Heart left ventricle (tissue), 16 donors: ENCODE measurements at regions of chr6 and their contacts with region 1.

Region 1: GRCh38 chr6:7615611-7616383 is 25.8 kb downstream of the SNRNP48 start:
- DNase-seq: peak in 1 of 5 donors; percentile 43
- ATAC-seq: peak in 3 of 4 donors; percentile 16 to 60 (median 47)
- H3K4me3 ChIP-seq: peak overlapping the region in 6 of 12 donors; percentile 3 to 42 (median 33)
- H3K27ac ChIP-seq: no peak overlapping the region
- H3K4me1 ChIP-seq: peaks cover 0 to 29% (median 3%) of the 10 kb centered on the region in 12 donors
- H3K27me3 ChIP-seq: no peaks in the 10 kb centered on the region
- CTCF ChIP-seq: peak; percentile 56 to 78 (median 70)
- POLR2A ChIP-seq: no peak

Region 2: GRCh38 chr6:6676910-6677441 is 938.8 kb before region 1 on chr6:
- intact Hi-C with region 1: loop called in 2 of 10 experiments (anchors 5 to 10 kb)
- DNase-seq: peak in 4 of 5 donors; percentile 63 to 75 (median 72)
- ATAC-seq: peak; percentile 73 to 87 (median 86)
- H3K4me3 ChIP-seq: no peak overlapping the region
- H3K27ac ChIP-seq: peak overlapping the region in 11 of 12 donors; percentile 15 to 77 (median 58)
- H3K4me1 ChIP-seq: peaks cover 0 to 45% (median 11%) of the 10 kb centered on the region in 12 donors
- H3K27me3 ChIP-seq: no peaks in the 10 kb centered on the region
- CTCF ChIP-seq: peak; percentile 95 to 99 (median 98)
- POLR2A ChIP-seq: no peak

Region 3: GRCh38 chr6:7276199-7276524 is 339.6 kb before region 1 on chr6:
- intact Hi-C with region 1: loop called (anchors 1 to 10 kb)
- DNase-seq: no peak
- ATAC-seq: no peak
- H3K4me3 ChIP-seq: no peak overlapping the region
- H3K27ac ChIP-seq: no peak overlapping the region
- H3K4me1 ChIP-seq: peaks cover 0 to 17% (median 0%) of the 10 kb centered on the region in 12 donors
- H3K27me3 ChIP-seq: no peaks in the 10 kb centered on the region
- CTCF ChIP-seq: peak in 1 of 12 donors; percentile 1
- POLR2A ChIP-seq: no peak

Region 4: DNA sequence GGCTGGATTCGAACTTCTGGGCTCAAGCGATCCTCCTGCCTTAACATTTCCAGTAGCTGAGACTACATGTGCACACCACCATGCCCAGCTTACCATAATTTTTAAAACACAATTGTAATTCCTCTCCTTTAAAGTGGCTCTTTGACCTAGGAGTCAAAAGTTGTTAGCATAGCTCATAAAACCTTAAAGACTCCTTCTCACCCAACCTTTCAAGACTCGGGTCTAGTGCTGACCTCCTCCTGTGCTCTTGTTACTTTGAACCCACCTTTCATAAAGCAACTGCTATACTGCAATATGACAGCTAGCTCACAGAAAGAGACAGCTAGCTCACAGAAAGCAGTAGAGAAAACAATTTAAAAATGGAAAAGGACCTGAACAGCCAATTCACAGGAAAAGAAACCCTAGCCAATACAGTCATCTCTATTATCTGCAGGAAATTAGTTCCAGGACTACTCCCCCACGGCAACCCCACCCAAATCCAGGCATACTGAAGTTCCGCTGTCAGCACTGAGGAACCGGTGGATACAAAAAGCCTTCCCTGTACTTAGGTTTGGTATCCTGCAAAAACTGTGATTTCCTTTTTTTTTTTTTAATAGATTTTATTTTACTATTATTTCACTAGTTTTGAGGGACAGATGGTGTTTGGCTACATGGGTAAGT is 323.1 kb before region 1 on chr6:
- intact Hi-C with region 1: loop called in 3 of 10 experiments (anchors 5 to 10 kb)
- DNase-seq: no peak
- ATAC-seq: peak in 3 of 4 donors; percentile 62 to 90 (median 64)
- H3K4me3 ChIP-seq: no peak overlapping the region
- H3K27ac ChIP-seq: peak overlapping the region in 11 of 12 donors; percentile 2 to 68 (median 21)
- H3K4me1 ChIP-seq: peaks cover 0 to 7% (median 0%) of the 10 kb centered on the region in 12 donors
- H3K27me3 ChIP-seq: no peaks in the 10 kb centered on the region
- CTCF ChIP-seq: no peak
- POLR2A ChIP-seq: no peak

Region 5: GRCh38 chr6:7414811-7415210 is 201.0 kb before region 1 on chr6:
- intact Hi-C with region 1: loop called in 6 of 10 experiments (anchors 10 kb)
- DNase-seq: no peak
- ATAC-seq: no peak
- H3K4me3 ChIP-seq: no peak overlapping the region
- H3K27ac ChIP-seq: no peak overlapping the region
- H3K4me1 ChIP-seq: no peaks in the 10 kb centered on the region
- H3K27me3 ChIP-seq: no peaks in the 10 kb centered on the region
- CTCF ChIP-seq: no peak
- POLR2A ChIP-seq: no peak